HCT116 (cell line): ENCODE measurements at regions of chr14 and their contacts with region 1.

Region 1: GRCh38 chr14:91996948-91997371 is 42.9 kb downstream of the TRIP11 start:
- DNase-seq: peak; percentile 44
- ATAC-seq: peak; percentile 77
- H3K4me3 ChIP-seq: no peak overlapping the region
- H3K27ac ChIP-seq: no peak overlapping the region
- H3K4me1 ChIP-seq: no peaks in the 10 kb centered on the region
- H3K27me3 ChIP-seq: no peaks in the 10 kb centered on the region
- CTCF ChIP-seq: peak; percentile 36 to 72 (median 67); a peak in 5 of 6 replicates
- POLR2A ChIP-seq: no peak
- RAD21 ChIP-seq: peak; percentile 49; the same call in 1 of the 2 replicates

Region 2: DNA sequence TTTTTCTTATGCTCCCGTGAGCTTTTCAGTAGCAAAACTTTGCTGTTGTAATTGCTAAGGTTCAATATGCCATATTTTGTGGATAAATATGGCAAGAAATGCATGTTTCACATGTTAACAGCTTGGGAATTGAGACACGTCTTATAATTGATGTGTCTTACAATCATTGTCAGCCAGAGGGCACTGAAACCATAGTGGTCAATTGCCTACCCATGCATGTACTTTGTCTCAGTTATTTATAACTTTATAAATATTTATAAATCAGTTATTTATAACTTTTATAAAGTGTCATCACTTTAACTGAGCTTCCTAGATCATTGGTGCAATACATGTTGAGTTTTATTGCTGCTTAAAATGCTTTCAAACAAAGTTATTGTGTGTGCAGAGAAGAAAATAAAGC is 347.0 kb before region 1 on chr14:
- CTCF ChIA-PET with region 1: interaction called, 14 read pairs
- POLR2A ChIA-PET with region 1: no interaction called
- RAD21 ChIA-PET with region 1: no interaction called
- intact Hi-C with region 1: loop called (anchors 5 kb)
- DNase-seq: peak; percentile 26
- ATAC-seq: peak; percentile 70
- H3K4me3 ChIP-seq: no peak overlapping the region
- H3K27ac ChIP-seq: no peak overlapping the region
- H3K4me1 ChIP-seq: no peaks in the 10 kb centered on the region; a peak in 1 of 4 replicates
- H3K27me3 ChIP-seq: no peaks in the 10 kb centered on the region
- CTCF ChIP-seq: peak; percentile 43 to 80 (median 51); a peak in 5 of 6 replicates
- POLR2A ChIP-seq: no peak
- RAD21 ChIP-seq: peak; percentile 88

Region 3: GRCh38 chr14:91793704-91794103 is 203.3 kb before region 1 on chr14:
- CTCF ChIA-PET with region 1: no interaction called
- POLR2A ChIA-PET with region 1: no interaction called
- RAD21 ChIA-PET with region 1: no interaction called
- intact Hi-C with region 1: no loop called
- DNase-seq: no peak
- ATAC-seq: no peak
- H3K4me3 ChIP-seq: no peak overlapping the region
- H3K27ac ChIP-seq: no peak overlapping the region
- H3K4me1 ChIP-seq: no peaks in the 10 kb centered on the region
- H3K27me3 ChIP-seq: no peaks in the 10 kb centered on the region
- CTCF ChIP-seq: no peak
- POLR2A ChIP-seq: no peak
- RAD21 ChIP-seq: no peak

Region 4: GRCh38 chr14:91805659-91806058 is 191.3 kb before region 1 on chr14:
- CTCF ChIA-PET with region 1: no interaction called
- POLR2A ChIA-PET with region 1: no interaction called
- RAD21 ChIA-PET with region 1: no interaction called
- intact Hi-C with region 1: no loop called
- DNase-seq: no peak
- ATAC-seq: no peak
- H3K4me3 ChIP-seq: no peak overlapping the region
- H3K27ac ChIP-seq: no peak overlapping the region
- H3K4me1 ChIP-seq: no peaks in the 10 kb centered on the region
- H3K27me3 ChIP-seq: no peaks in the 10 kb centered on the region
- CTCF ChIP-seq: no peak
- POLR2A ChIP-seq: no peak
- RAD21 ChIP-seq: no peak

Region 5: DNA sequence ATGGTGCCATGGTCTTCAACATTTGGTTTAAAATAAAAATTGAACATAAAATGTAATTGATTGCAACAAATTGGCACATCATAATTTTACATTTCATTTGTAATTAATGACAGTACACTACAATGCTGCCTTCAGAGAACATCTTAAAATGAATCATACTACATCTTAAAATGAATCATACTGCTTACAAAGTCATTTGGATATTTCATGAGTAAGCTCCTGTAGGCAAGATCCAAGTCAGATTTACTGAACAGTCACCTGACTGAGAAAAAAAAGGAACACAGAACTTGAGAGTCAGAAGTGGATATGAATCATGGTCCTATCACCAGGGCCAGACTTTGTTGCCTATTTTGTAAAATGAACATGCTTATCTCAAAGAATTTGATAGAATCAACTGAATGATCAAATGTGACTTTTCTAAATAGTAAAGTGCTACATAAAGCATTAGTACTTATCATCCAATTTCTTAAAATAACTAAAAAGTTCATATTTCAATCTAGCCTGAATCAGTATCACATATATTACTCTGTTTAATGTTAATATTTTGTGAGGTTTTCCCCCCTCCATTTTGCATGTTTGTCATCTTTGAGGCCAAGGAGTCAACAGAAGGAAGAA is 16.7 kb before region 1 on chr14:
- CTCF ChIA-PET with region 1: interaction called, 18 read pairs
- POLR2A ChIA-PET with region 1: no interaction called
- RAD21 ChIA-PET with region 1: no interaction called
- intact Hi-C with region 1: no loop called
- DNase-seq: peak; percentile 75
- ATAC-seq: peak; percentile 76
- H3K4me3 ChIP-seq: no peak overlapping the region
- H3K27ac ChIP-seq: peak overlapping the region; percentile 26; the same call in 1 of the 2 replicates
- H3K4me1 ChIP-seq: peaks cover 0 to 10% of the 10 kb centered on the region in 2 experiments; a peak in 3 of 4 replicates
- H3K27me3 ChIP-seq: no peaks in the 10 kb centered on the region
- CTCF ChIP-seq: no peak
- POLR2A ChIP-seq: no peak
- RAD21 ChIP-seq: no peak

Region 6: GRCh38 chr14:91985521-91986255 is 11.3 kb before region 1 on chr14:
- CTCF ChIA-PET with region 1: interaction called, 12 read pairs
- POLR2A ChIA-PET with region 1: no interaction called
- RAD21 ChIA-PET with region 1: no interaction called
- intact Hi-C with region 1: no loop called
- DNase-seq: no peak
- ATAC-seq: no peak
- H3K4me3 ChIP-seq: no peak overlapping the region
- H3K27ac ChIP-seq: no peak overlapping the region
- H3K4me1 ChIP-seq: peaks cover 0 to under 1% of the 10 kb centered on the region in 2 experiments; a peak in 1 of 4 replicates
- H3K27me3 ChIP-seq: no peaks in the 10 kb centered on the region
- CTCF ChIP-seq: no peak
- POLR2A ChIP-seq: no peak
- RAD21 ChIP-seq: no peak